WTC11 (cell line): ENCODE measurements at regions of chr21 and their contacts with region 1.

Region 1: DNA sequence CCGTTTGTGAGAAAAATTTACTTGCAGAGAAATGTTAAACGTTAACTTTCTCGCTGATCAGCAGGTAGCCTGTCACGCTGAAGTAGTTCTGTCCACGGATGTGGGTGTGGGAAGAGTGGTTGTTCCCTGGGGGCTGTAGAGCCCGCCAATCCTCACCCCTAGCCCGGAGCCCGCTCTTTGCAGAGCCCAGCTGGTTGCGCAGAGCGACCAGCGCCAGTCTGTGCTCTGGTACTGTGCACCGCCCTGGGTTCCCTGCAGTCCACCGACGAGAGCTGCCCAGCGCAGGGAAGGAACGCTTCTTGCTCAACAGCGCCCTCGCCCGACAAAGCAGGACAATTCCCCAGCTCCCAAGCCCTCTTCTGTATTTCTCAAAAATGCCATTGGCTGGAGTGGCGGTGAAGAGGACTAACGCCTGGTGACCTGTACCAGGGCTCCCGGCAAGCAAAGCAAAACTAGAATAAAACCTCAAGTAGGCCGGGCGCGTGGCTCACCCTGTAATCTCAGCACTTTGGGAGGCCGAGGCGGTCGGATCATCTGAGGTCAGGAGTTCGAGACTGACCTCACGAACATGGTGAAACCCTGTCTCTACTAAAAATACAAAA is 3.3 kb downstream of the RIPPLY3 start:
- DNase-seq: peak; percentile 94
- ATAC-seq: peak; percentile 91
- H3K4me3 Mint-ChIP-seq: peak overlapping the region; percentile 50
- H3K27ac Mint-ChIP-seq: no peak overlapping the region
- H3K4me1 Mint-ChIP-seq: peaks cover 9% of the 10 kb centered on the region; the same call in 1 of the 2 replicates
- H3K27me3 Mint-ChIP-seq: peaks cover 57% of the 10 kb centered on the region
- CTCF ChIP-seq: peak; percentile 79

Region 2: GRCh38 chr21:36989699-36990507 is 19.9 kb before region 1 on chr21:
- CTCF ChIA-PET with region 1: interaction called, 35 read pairs
- POLR2A ChIA-PET with region 1: interaction called, 4 read pairs
- DNase-seq: peak; percentile 92
- ATAC-seq: peak; percentile 87
- H3K4me3 Mint-ChIP-seq: peak overlapping the region; percentile 76
- H3K27ac Mint-ChIP-seq: peak overlapping the region; percentile 94
- H3K4me1 Mint-ChIP-seq: peaks cover 30% of the 10 kb centered on the region
- H3K27me3 Mint-ChIP-seq: peaks cover 18% of the 10 kb centered on the region
- CTCF ChIP-seq: peak; percentile 78

Region 3: GRCh38 chr21:37041706-37042271 is 31.9 kb after region 1 on chr21:
- CTCF ChIA-PET with region 1: interaction called, 10 read pairs
- POLR2A ChIA-PET with region 1: no interaction called
- DNase-seq: no peak
- ATAC-seq: peak; percentile 43; the same call in 1 of the 2 replicates
- H3K4me3 Mint-ChIP-seq: no peak overlapping the region
- H3K27ac Mint-ChIP-seq: no peak overlapping the region
- H3K4me1 Mint-ChIP-seq: peaks cover 21% of the 10 kb centered on the region
- H3K27me3 Mint-ChIP-seq: peaks cover 88% of the 10 kb centered on the region
- CTCF ChIP-seq: no peak

Region 4: GRCh38 chr21:37119421-37120218 is 109.8 kb after region 1 on chr21:
- CTCF ChIA-PET with region 1: interaction called, 11 read pairs
- POLR2A ChIA-PET with region 1: no interaction called
- DNase-seq: peak; percentile 37
- ATAC-seq: peak; percentile 100
- H3K4me3 Mint-ChIP-seq: no peak overlapping the region
- H3K27ac Mint-ChIP-seq: peak overlapping the region; percentile 32; the same call in 1 of the 2 replicates
- H3K4me1 Mint-ChIP-seq: peaks cover 6% of the 10 kb centered on the region
- H3K27me3 Mint-ChIP-seq: no peaks in the 10 kb centered on the region
- CTCF ChIP-seq: no peak